ENCODE measurements at regions of chr1 and their contacts with region 1.

Region 1: DNA sequence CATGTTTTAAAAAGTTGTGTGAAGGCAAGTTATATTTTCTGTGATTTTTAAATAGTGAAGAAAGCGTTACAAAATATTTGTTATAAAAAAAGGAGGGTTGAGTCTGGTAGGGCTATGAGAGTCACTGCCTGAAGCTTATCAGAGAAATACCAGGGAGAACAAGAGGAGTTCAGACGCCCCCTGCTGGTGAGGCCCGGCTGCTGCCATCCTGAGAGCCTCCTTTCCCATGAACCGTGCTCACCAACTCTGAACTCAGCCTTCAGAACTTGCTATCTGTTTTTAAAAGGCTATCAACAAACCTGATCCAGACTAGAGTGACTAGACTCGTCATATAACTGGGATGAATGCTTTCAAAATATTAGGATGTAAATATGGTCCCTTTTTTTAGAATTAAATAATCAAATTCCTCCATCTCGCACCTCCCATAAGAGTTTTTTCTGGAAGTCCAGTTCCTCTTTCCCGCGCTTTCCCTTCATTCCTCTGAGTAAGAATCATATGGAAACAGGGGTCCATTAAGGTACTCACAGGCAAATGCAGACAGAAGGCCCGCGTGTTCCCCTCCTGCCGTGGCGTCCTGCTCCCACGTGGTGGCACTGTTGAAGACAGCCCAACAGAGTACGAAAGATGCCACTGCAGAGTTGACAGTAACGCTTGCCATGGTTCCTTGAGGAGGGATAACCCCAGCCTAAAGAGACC is 26.2 kb upstream of the SPATA6 start:
- DNase-seq: peak; percentile 32
- ATAC-seq: peak; percentile 77
- H3K4me3 Mint-ChIP-seq: no peak overlapping the region
- H3K27ac Mint-ChIP-seq: no peak overlapping the region
- H3K4me1 Mint-ChIP-seq: peaks cover 4% of the 10 kb centered on the region
- H3K27me3 Mint-ChIP-seq: peaks cover 3% of the 10 kb centered on the region
- CTCF ChIP-seq: peak; percentile 85

Region 2: DNA sequence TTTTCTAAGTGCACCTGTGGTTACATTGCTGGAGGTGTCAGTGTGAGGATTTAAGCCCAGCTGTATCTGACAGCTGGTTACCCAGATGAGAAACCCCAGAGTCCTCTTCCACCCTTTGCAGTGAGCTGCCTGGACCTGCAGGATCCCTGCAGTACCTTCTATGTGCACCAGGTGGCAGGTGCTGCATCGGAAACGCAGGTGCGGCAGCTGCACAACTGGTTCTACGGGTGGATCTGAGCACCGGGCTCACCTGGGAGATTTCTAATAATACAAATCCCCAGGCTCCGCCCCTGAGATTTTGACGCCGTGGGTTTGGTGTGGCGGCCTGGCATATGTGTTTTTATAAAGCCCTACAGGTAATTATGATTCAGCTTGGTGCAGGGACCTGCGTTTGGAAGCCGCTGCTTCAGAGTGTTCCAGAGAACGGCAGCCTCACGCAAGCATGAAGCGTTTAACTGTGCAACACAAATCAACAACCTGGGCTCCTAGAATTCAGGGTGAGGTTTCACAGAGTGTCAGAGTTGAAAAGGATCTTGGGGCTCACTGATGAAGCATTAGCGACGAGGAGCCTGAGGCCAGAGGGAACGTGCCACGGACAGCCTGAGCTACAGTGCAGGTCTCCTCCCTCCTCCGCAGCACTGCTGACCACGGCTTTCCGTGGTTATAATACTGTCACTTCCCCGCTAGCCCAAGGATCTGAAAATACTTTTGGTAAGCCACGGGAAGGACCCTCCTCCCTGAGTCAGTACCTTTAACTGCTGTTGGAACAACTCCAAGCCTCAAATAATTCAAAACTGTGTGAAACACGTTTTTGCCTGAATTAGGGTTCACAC is 404.3 kb before region 1 on chr1:
- CTCF ChIA-PET with region 1: interaction called, 6 read pairs
- POLR2A ChIA-PET with region 1: no interaction called
- intact Hi-C with region 1: loop called (anchors 5 kb)
- DNase-seq: peak; percentile 50
- ATAC-seq: peak; percentile 75
- H3K4me3 Mint-ChIP-seq: peak overlapping the region; percentile 45
- H3K27ac Mint-ChIP-seq: no peak overlapping the region
- H3K4me1 Mint-ChIP-seq: peaks cover 6% of the 10 kb centered on the region
- H3K27me3 Mint-ChIP-seq: peaks cover 42% of the 10 kb centered on the region
- CTCF ChIP-seq: peak; percentile 70

Region 3: DNA sequence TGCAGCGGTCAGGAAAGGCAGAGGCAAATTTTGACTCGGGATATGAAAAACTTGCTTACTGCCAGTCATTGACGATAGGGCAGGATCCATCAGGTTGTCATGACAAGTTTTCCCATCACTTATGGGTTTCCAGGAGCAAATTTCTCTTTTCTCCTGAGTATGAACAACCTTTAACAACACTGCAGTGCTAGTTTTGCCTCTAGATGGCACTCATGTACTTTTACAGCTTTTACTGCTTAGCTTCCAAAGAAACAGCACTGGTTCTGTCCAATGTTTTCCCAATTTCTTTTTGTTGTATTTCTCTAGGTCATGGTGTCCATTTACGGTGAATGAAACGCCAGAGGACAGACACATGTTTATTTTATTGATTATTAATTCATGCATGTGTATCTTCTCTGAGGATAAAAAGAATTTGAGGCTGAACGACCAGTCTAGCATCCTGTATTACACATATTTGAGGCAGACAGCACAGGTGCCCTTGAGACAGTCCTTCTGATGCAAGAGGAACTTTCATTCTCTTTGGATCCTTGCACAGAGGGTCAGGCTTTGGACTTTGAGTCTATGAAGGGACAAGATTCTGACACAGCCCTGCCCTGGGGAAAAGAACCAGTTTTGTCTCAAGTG is 388.7 kb before region 1 on chr1:
- CTCF ChIA-PET with region 1: interaction called, 28 read pairs
- POLR2A ChIA-PET with region 1: no interaction called
- intact Hi-C with region 1: no loop called
- DNase-seq: no peak
- ATAC-seq: no peak
- H3K4me3 Mint-ChIP-seq: no peak overlapping the region
- H3K27ac Mint-ChIP-seq: no peak overlapping the region
- H3K4me1 Mint-ChIP-seq: no peaks in the 10 kb centered on the region
- H3K27me3 Mint-ChIP-seq: peaks cover 5% of the 10 kb centered on the region
- CTCF ChIP-seq: peak; percentile 25

Region 4: DNA sequence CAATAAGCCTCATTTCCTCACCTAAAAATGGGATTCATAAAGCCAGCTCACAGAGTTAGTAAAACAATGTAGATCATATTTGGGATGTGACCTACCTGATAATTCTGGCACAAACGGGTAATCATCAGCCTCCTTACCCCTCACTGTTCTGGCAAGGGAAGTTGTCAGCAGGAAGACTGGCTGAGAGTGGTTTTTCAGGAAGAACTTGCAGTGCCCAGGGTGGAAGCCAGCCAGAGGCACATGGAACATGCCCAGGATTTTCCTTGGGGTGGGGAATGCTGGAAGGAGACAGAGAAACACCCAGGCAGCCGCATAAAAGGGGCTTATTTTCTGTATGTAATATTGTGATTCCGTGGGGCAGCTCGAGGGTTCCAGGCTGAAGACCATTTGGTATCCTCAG is 283.4 kb before region 1 on chr1:
- CTCF ChIA-PET with region 1: no interaction called
- POLR2A ChIA-PET with region 1: no interaction called
- intact Hi-C with region 1: loop called (anchors 5 kb)
- DNase-seq: no peak
- ATAC-seq: no peak
- H3K4me3 Mint-ChIP-seq: no peak overlapping the region
- H3K27ac Mint-ChIP-seq: no peak overlapping the region
- H3K4me1 Mint-ChIP-seq: no peaks in the 10 kb centered on the region
- H3K27me3 Mint-ChIP-seq: peaks cover 14% of the 10 kb centered on the region
- CTCF ChIP-seq: no peak

Region 5: GRCh38 chr1:48524892-48525467 is 26.7 kb after region 1 on chr1:
- CTCF ChIA-PET with region 1: no interaction called
- POLR2A ChIA-PET with region 1: no interaction called
- intact Hi-C with region 1: no loop called
- DNase-seq: no peak
- ATAC-seq: no peak
- H3K4me3 Mint-ChIP-seq: no peak overlapping the region
- H3K27ac Mint-ChIP-seq: no peak overlapping the region
- H3K4me1 Mint-ChIP-seq: no peaks in the 10 kb centered on the region
- H3K27me3 Mint-ChIP-seq: peaks cover 9% of the 10 kb centered on the region
- CTCF ChIP-seq: no peak

Region 6: DNA sequence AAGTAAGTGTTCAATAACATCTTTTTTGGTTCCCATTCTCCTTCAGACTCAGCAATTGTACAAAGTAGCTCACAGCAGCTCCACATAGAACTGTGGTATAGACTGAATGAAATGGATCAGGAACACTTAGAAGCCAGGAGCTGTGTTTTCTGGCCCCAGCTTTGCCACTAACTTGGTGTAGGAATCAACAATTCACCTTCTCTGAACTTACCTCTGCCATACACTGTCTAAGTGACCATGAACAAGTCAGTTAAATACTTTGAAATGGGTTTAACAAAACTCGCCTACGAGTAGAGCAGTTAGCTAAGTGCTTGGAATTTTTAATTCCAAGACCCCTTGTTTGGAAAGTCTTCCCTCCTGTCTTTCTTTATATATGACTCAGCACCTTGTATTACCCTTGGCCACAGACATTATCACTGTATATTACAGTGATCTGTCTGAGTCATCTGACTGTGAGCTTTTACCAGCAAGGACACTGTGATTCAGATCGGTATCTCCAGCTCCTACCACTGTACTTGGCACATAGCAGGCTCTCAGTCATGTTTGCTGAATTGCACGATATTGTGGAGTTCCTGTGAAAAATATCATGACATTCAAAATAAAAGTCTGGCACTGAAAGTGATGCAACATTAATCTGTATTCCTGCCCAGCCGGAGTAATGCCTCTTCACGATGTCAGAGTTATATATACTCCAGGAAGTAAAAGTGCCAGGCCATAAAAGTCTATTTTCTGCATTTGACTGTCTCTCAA is 380.1 kb after region 1 on chr1:
- CTCF ChIA-PET with region 1: no interaction called
- POLR2A ChIA-PET with region 1: no interaction called
- intact Hi-C with region 1: no loop called
- DNase-seq: no peak
- ATAC-seq: no peak
- H3K4me3 Mint-ChIP-seq: no peak overlapping the region
- H3K27ac Mint-ChIP-seq: no peak overlapping the region
- H3K4me1 Mint-ChIP-seq: no peaks in the 10 kb centered on the region
- H3K27me3 Mint-ChIP-seq: peaks cover 9% of the 10 kb centered on the region
- CTCF ChIP-seq: no peak

Measured in activated B cell treated with CpG ODN at 0.5 μM for 24 hours (primary cell).